ENCODE measurements at regions of chr10 and their contacts with region 1.

Region 1: GRCh38 chr10:15168781-15169554 is 475 bp upstream of the NMT2 start:
- DNase-seq: peak; percentile 87
- H3K4me3 ChIP-seq: no peak overlapping the region
- H3K27ac ChIP-seq: no peak overlapping the region
- H3K4me1 ChIP-seq: peaks cover 35% of the 10 kb centered on the region
- H3K27me3 ChIP-seq: no peaks in the 10 kb centered on the region
- CTCF ChIP-seq: no peak
- POLR2A ChIP-seq: no peak

Region 2: DNA sequence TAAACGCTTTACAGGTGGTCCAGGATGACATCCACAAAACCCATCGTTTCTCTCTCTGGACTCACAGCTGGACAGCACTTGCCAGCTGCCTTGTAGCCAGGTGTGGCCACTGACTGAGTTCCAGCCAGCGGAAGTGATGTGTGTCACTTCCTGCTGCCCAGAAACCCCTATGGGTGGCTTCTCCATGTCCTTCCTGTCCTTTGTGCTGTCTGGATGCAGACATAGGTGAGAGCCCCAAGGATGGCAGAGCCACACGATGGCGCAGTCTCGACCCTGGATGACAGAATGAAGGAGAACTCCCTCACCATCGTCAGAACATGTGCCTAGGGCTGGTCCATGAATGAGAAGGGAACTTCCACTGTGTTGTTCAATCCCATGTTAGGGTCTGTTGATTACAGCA is 22.6 kb before region 1 on chr10:
- CTCF ChIA-PET with region 1: interaction called, 23 read pairs
- POLR2A ChIA-PET with region 1: no interaction called
- dilution Hi-C with region 1: no loop called
- intact Hi-C with region 1: no loop called
- DNase-seq: peak; percentile 20
- H3K4me3 ChIP-seq: no peak overlapping the region
- H3K27ac ChIP-seq: no peak overlapping the region
- H3K4me1 ChIP-seq: peaks cover 24% of the 10 kb centered on the region
- H3K27me3 ChIP-seq: no peaks in the 10 kb centered on the region
- CTCF ChIP-seq: no peak
- POLR2A ChIP-seq: no peak

Region 3: DNA sequence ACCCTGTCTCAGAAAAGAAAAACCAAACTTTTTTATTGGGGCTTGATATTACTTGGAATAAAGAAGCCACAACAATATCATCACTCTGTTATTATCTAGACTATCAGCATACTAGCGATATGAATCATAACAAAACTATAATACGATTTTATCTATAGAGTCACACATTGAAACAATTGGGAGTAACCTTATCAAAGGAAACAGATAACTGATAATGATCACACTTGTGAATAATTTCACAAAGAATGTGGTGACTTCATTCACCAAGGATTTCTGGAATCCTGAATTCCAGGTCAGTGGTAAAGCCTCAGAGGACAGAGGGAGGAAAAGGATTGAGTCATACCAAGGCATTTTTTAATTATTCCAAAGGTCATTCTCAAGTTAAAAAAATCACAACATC is 31.7 kb after region 1 on chr10:
- CTCF ChIA-PET with region 1: interaction called, 21 read pairs
- POLR2A ChIA-PET with region 1: interaction called, 16 read pairs
- dilution Hi-C with region 1: no loop called
- intact Hi-C with region 1: loop called (anchors 1 kb)
- DNase-seq: peak; percentile 94
- H3K4me3 ChIP-seq: no peak overlapping the region
- H3K27ac ChIP-seq: peak overlapping the region; percentile 100
- H3K4me1 ChIP-seq: peaks cover 70% of the 10 kb centered on the region
- H3K27me3 ChIP-seq: no peaks in the 10 kb centered on the region
- CTCF ChIP-seq: no peak
- POLR2A ChIP-seq: peak; percentile 82

Region 4: DNA sequence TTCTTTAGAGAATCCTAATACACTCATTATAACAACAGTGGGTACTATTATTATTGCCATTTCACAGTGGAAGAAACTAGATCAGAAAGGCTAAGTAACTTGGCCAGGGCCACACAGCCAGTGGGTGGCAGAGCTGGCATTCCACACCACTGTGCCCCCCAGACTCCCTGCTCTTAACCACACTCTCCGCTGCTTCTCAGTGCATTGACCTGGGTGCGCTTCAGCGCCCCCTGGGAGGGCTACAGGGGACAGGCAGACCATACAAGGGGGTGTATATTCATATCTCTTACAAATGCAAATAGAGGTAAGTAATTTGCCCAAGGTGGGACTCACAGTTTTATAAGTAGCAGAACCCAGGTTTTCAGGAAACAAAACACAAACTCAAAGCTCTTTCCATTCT is 76.6 kb after region 1 on chr10:
- CTCF ChIA-PET with region 1: interaction called, 3 read pairs
- POLR2A ChIA-PET with region 1: interaction called, 4 read pairs
- dilution Hi-C with region 1: no loop called
- intact Hi-C with region 1: loop called (anchors 2 kb)
- DNase-seq: peak; percentile 34
- H3K4me3 ChIP-seq: no peak overlapping the region
- H3K27ac ChIP-seq: no peak overlapping the region
- H3K4me1 ChIP-seq: peaks cover 14% of the 10 kb centered on the region
- H3K27me3 ChIP-seq: no peaks in the 10 kb centered on the region
- CTCF ChIP-seq: peak; percentile 24 to 36
- POLR2A ChIP-seq: no peak

Region 5: GRCh38 chr10:15387021-15387420 is 218.1 kb after region 1 on chr10:
- CTCF ChIA-PET with region 1: interaction called, 3 read pairs
- POLR2A ChIA-PET with region 1: no interaction called
- dilution Hi-C with region 1: no loop called
- intact Hi-C with region 1: loop called (anchors 5 kb)
- DNase-seq: no peak
- H3K4me3 ChIP-seq: no peak overlapping the region
- H3K27ac ChIP-seq: no peak overlapping the region
- H3K4me1 ChIP-seq: peaks cover 20% of the 10 kb centered on the region
- H3K27me3 ChIP-seq: no peaks in the 10 kb centered on the region
- CTCF ChIP-seq: no peak
- POLR2A ChIP-seq: no peak

Measured in endothelial cell of umbilical vein (primary cell).